Ovary (tissue), 10 donors: ENCODE measurements at regions of chr2 and their contacts with region 1.

Region 1: GRCh38 chr2:211376410-211376809 is 820.0 kb downstream of the CPS1 start:
- DNase-seq: no peak
- H3K4me3 ChIP-seq: no peak overlapping the region
- H3K27ac ChIP-seq: no peak overlapping the region
- H3K4me1 ChIP-seq: no peaks in the 10 kb centered on the region
- H3K27me3 ChIP-seq: no peaks in the 10 kb centered on the region
- CTCF ChIP-seq: no peak
- EP300 ChIP-seq: no peak
- POLR2A ChIP-seq: no peak

Region 2: GRCh38 chr2:210112871-210113270 is 1263.5 kb before region 1 on chr2:
- intact Hi-C with region 1: no loop called
- DNase-seq: no peak
- H3K4me3 ChIP-seq: no peak overlapping the region
- H3K27ac ChIP-seq: no peak overlapping the region
- H3K4me1 ChIP-seq: no peaks in the 10 kb centered on the region
- H3K27me3 ChIP-seq: no peaks in the 10 kb centered on the region
- CTCF ChIP-seq: no peak
- EP300 ChIP-seq: no peak
- POLR2A ChIP-seq: no peak

Region 3: DNA sequence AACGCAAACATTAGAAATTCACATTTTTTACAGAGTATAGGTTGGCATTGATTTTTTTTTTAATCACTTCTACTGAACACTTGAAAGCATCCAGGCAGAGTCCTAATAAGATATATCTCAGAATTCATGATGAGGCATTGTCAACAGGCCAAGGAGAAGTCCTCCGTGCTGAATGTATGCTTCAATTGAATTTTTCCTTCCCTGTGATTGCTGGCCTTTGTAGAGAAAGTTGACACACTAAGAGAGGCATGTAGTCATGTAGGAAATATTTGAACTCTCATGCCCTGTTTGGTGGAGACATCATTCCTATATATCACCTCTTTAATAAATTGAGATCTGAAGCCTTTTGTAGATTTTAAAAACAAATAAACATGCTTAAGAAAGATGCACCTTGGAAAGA is 24.9 kb after region 1 on chr2:
- intact Hi-C with region 1: loop called in 1 of 4 experiments (anchors 2 kb)
- DNase-seq: no peak
- H3K4me3 ChIP-seq: no peak overlapping the region
- H3K27ac ChIP-seq: no peak overlapping the region
- H3K4me1 ChIP-seq: no peaks in the 10 kb centered on the region
- H3K27me3 ChIP-seq: no peaks in the 10 kb centered on the region
- CTCF ChIP-seq: no peak
- EP300 ChIP-seq: no peak
- POLR2A ChIP-seq: no peak